ENCODE measurements at regions of chr11 and their contacts with region 1.

Region 1: DNA sequence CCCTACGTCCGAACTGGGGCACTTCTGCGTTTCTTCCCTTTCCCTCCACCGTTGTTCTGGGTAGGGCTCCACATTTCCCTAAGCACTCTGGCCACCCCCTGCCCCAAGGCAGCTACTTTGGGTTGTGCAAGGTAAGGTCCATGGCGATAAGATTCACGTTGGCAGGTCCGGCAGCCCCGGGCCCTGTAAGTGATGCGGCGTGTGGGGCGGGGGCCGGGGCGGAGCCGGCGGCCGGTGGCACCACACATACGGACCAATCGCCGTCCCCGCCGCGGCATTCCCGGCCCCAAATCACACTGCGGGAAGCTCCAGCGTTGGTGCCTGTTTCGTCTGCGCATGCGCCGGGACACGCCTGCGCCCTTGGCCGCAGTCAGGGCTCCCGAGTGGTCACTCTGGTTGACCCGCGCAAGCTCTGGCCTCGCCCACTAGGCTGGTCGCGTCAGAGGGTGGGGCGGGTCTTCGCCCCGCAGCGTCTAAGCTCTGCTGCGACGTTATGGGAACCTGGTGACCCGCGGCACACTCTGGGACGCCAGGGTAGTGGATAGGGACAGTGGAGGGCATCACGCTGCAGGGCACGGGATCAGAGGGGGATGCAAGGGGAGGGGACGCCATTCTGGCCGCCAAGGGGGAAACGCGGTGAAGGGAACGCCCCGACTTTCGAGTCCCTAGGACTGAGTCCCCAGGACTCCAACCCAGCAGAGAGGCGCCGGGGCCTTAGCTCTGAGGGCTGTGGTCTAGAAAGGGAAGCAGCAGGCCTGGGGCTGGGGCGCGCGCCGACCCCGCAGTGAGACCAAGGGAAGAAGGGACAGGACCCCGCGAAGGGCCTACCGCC is 1.6 kb downstream of the FADS1 start:
- DNase-seq: peak in 16 of 35 experiments; percentile 10 to 57 (median 26)
- ATAC-seq: peak; percentile 12 to 42 (median 18)
- H3K4me3 ChIP-seq: peak overlapping the region; percentile 67 to 79
- H3K4me3 Mint-ChIP-seq: peak overlapping the region; percentile 85 to 91 (median 85)
- H3K27ac ChIP-seq: no peak overlapping the region
- H3K27ac Mint-ChIP-seq: peak overlapping the region; percentile 1 to 43
- H3K4me1 ChIP-seq: peaks cover 12 to 26% of the 10 kb centered on the region in 2 experiments
- H3K4me1 Mint-ChIP-seq: peaks cover 13 to 19% (median 16%) of the 10 kb centered on the region in 3 donors
- H3K27me3 ChIP-seq: peaks cover 0 to 43% of the 10 kb centered on the region in 2 experiments
- H3K27me3 Mint-ChIP-seq: peaks cover 0 to 32% of the 10 kb centered on the region in 2 donors

Region 2: GRCh38 chr11:61885166-61885778 is 70.1 kb after region 1 on chr11:
- CTCF ChIA-PET with region 1: no interaction called
- POLR2A ChIA-PET with region 1: no interaction called
- DNase-seq: no peak
- ATAC-seq: no peak
- H3K4me3 ChIP-seq: no peak overlapping the region
- H3K4me3 Mint-ChIP-seq: no peak overlapping the region
- H3K27ac ChIP-seq: no peak overlapping the region
- H3K27ac Mint-ChIP-seq: no peak overlapping the region
- H3K4me1 ChIP-seq: peaks cover 2 to 5% of the 10 kb centered on the region in 2 experiments
- H3K4me1 Mint-ChIP-seq: peaks cover 0 to 5% (median 1%) of the 10 kb centered on the region in 3 donors
- H3K27me3 ChIP-seq: peaks cover 0 to 11% of the 10 kb centered on the region in 2 experiments
- H3K27me3 Mint-ChIP-seq: no peaks in the 10 kb centered on the region

Region 3: DNA sequence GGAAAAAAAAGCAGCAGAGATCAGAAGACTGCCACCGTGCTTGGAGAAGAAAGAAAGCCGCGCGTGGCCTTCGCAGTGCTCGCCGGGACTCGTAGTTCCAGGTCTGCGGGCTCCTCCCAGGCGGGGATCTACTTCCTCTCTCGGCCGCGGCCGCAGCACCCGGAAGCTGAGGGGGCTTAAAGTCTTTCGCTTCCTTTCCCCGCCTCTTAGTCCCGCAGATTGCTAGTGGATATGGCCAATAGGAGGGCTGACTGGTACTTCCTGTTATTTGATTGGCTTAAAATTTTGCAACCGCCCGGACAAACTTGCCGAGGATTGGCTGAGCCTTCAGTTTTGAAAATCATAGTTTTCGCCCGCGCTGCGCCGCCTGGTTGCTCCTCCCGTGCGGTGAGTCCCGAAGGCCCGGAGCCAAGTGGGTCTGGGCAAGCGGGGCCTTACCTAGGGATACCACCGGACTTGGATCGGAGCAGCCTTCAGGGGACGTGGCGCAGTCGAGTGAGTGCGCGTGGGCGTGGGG is 308.6 kb after region 1 on chr11 and contains the start of gene INCENP:
- CTCF ChIA-PET with region 1: interaction called in 1 of 2 experiments, 13 read pairs
- POLR2A ChIA-PET with region 1: no interaction called
- DNase-seq: peak; percentile 86 to 97 (median 95)
- ATAC-seq: peak; percentile 99 to 100 (median 99)
- H3K4me3 ChIP-seq: peak within 1 kb of the TSS; percentile 89 to 92
- H3K4me3 Mint-ChIP-seq: peak within 1 kb of the TSS; percentile 91 to 94 (median 91)
- H3K27ac ChIP-seq: peak within 1 kb of the TSS; percentile 40
- H3K27ac Mint-ChIP-seq: peak within 1 kb of the TSS; percentile 79 to 83
- H3K4me1 ChIP-seq: peaks cover 11 to 22% of the 10 kb centered on the region in 2 experiments
- H3K4me1 Mint-ChIP-seq: peaks cover 28 to 46% (median 30%) of the 10 kb centered on the region in 3 donors
- H3K27me3 ChIP-seq: no peaks in the 10 kb centered on the region
- H3K27me3 Mint-ChIP-seq: no peaks in the 10 kb centered on the region
- total RNA-seq, gene INCENP: 20.7 to 31.4 (median 24.9) TPM

Measured in T-cell (primary cell).